IMR-90 (cell line): ENCODE measurements at regions of chr15 and their contacts with region 1.

Region 1: DNA sequence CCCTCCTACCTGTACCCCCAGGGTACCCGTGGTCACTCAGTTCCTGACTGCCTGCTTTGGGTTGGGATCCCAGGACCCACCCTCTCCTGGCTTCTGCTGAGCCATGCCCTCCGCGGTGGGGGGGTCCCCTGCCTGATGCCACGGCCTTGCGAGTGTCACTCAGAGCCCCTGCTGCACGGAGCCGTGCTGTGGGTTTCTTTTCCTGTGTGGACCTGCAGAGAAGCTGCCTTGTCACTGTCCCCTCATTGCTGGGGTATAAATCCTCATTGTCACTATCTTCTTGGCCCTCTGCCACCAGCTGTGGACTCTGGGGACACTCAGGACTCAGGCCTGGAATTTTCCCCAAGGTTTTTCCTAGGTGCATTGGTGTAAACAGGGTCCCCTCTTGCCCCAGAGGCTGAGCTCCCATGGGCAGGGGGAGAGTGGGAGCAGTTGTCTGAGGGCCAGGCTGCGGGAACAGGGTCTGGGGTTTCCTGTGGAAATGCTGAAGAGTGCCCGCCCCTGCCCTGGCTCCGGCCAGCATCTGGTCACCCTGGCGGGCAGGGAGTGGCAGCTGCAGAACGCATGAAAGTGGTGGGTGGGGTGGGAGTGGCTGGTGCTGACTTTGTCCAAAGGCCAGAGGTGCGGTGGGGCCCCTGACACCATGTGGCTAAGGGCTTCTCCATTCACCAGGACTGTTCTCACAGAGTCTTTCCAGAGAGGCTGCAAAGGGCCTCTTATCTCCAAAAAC is 191.7 kb downstream of the GOLGA6L6 start:
- DNase-seq: no peak
- ATAC-seq: no peak
- H3K4me3 ChIP-seq: no peak overlapping the region
- H3K27ac ChIP-seq: no peak overlapping the region
- H3K4me1 ChIP-seq: no peaks in the 10 kb centered on the region
- H3K27me3 ChIP-seq: no peaks in the 10 kb centered on the region
- CTCF ChIP-seq: no peak
- POLR2A ChIP-seq: no peak
- RAD21 ChIP-seq: no peak

Region 2: GRCh38 chr15:20386198-20386597 is 36.3 kb after region 1 on chr15:
- CTCF ChIA-PET with region 1: no interaction called
- POLR2A ChIA-PET with region 1: no interaction called
- dilution Hi-C with region 1: no loop called
- in situ Hi-C with region 1: no loop called
- intact Hi-C with region 1: no loop called
- DNase-seq: no peak
- ATAC-seq: no peak
- H3K4me3 ChIP-seq: no peak overlapping the region
- H3K27ac ChIP-seq: no peak overlapping the region
- H3K4me1 ChIP-seq: no peaks in the 10 kb centered on the region
- H3K27me3 ChIP-seq: no peaks in the 10 kb centered on the region
- CTCF ChIP-seq: no peak
- POLR2A ChIP-seq: no peak
- RAD21 ChIP-seq: no peak

Region 3: GRCh38 chr15:20409247-20409646 is 59.3 kb after region 1 on chr15:
- CTCF ChIA-PET with region 1: no interaction called
- POLR2A ChIA-PET with region 1: no interaction called
- dilution Hi-C with region 1: no loop called
- in situ Hi-C with region 1: loop called (anchors 5 kb)
- intact Hi-C with region 1: no loop called
- DNase-seq: no peak
- ATAC-seq: no peak
- H3K4me3 ChIP-seq: no peak overlapping the region
- H3K27ac ChIP-seq: no peak overlapping the region
- H3K4me1 ChIP-seq: no peaks in the 10 kb centered on the region
- H3K27me3 ChIP-seq: no peaks in the 10 kb centered on the region
- CTCF ChIP-seq: no peak
- POLR2A ChIP-seq: no peak
- RAD21 ChIP-seq: no peak